GM10248 (cell line): ENCODE measurements at regions of chr17 and their contacts with region 1.

Region 1: GRCh38 chr17:35747540-35748017 is 5.5 kb downstream of the GAS2L2 start:
- DNase-seq: peak; percentile 88
- CTCF ChIP-seq: peak; percentile 85

Region 2: GRCh38 chr17:35555695-35556094 is 191.9 kb before region 1 on chr17:
- CTCF ChIA-PET with region 1: interaction called, 20 read pairs
- POLR2A ChIA-PET with region 1: no interaction called
- DNase-seq: no peak
- CTCF ChIP-seq: peak; percentile 36

Region 3: DNA sequence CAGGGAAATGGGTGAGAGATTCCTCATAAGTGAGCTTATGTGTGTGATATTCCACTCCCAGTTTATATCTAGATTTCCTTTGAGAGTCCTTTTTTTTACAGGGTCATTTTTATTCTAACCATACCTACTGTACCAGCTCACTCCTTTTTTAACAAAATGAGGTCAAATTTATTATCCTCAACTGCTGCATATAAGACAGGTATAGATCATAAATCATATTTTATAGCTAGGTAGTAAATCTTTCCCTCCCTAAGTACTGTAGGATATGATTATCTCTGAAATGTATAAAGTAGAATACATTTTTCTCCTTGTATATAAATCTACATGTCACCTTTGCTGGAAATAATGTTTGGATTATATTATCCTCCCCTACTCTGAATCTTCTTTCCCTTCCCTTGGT is 129.0 kb before region 1 on chr17:
- CTCF ChIA-PET with region 1: interaction called, 107 read pairs
- POLR2A ChIA-PET with region 1: no interaction called
- DNase-seq: no peak
- CTCF ChIP-seq: no peak

Region 4: DNA sequence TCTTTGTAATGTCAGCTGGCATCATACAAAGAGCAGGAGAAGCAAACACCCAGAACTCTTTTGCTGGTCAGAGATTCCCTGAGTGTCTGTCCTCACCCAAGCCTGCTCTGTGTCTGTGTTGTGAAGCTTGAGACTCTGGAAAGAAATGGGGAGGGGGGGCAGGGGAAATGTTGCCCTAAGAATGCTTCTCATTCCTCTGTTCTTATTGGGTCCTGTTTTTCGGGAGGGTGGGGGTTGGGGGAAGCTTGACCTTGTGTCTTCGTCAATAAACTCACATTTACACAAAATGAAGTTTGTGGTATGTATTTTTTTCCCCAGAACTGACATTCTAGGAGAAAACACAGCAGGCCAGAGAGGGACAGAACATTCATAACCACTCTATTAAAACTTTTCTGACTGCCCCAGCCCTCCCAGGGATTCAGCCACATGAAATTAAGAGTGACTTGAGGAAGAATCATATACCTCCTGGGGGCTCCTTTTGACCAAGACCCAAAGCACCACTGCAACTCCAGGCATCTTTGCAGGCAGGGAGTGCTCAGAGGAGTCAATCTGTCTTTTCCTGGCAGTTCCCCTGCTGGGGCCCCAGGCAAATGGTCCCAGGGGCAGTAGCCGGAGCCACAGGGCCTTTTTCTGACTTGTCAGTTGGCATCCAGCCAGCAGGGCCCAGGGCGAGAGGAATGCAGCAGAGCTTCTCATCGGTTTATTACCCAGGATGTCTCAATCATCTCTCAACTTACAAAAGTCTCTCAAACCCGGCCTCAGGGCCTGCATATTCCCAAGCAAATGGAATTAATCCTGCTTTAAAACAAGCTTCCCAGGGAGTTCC is 21.2 kb before region 1 on chr17:
- CTCF ChIA-PET with region 1: interaction called, 16 read pairs
- POLR2A ChIA-PET with region 1: no interaction called
- DNase-seq: no peak
- CTCF ChIP-seq: no peak

Region 5: DNA sequence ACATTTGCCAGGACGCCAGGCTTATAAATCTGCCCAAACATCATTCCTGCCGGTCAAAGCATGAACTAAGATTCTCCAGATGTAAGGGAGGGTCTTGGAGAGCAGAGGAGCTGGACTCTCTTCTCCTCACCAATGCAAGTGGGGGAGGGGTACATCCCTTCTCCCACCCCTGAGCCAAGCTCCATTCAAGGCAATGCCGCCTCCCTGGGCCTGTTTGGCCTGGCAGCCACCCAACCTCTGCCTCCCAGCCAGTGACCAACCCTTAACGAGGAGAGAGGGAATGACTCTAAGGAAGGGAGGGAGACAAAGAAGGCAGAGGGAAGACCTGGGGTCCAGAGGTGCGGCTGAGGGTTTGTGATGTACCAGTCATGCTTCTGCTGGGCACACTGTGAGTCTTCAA is 26.9 kb after region 1 on chr17:
- CTCF ChIA-PET with region 1: interaction called, 10 read pairs
- POLR2A ChIA-PET with region 1: no interaction called
- DNase-seq: no peak
- CTCF ChIP-seq: no peak

Region 6: GRCh38 chr17:36524428-36524876 is 776.9 kb after region 1 on chr17:
- CTCF ChIA-PET with region 1: no interaction called
- POLR2A ChIA-PET with region 1: no interaction called
- DNase-seq: no peak
- CTCF ChIP-seq: no peak